ENCODE measurements at regions of chr11 and their contacts with region 1.

Region 1: GRCh38 chr11:10623797-10624761 is 55.6 kb upstream of the LYVE1 start:
- DNase-seq: peak; percentile 33
- ATAC-seq: peak; percentile 75
- H3K4me3 ChIP-seq: no peak overlapping the region
- H3K27ac ChIP-seq: no peak overlapping the region
- H3K4me1 ChIP-seq: no peaks in the 10 kb centered on the region
- H3K27me3 ChIP-seq: peaks cover 9% of the 10 kb centered on the region; the same call in 1 of the 2 replicates
- CTCF ChIP-seq: no peak

Region 2: GRCh38 chr11:9489080-9489765 is 1134.9 kb before region 1 on chr11:
- CTCF ChIA-PET with region 1: no interaction called
- POLR2A ChIA-PET with region 1: interaction called, 13 read pairs
- in situ Hi-C with region 1: no loop called
- intact Hi-C with region 1: no loop called
- DNase-seq: no peak
- ATAC-seq: no peak
- H3K4me3 ChIP-seq: no peak overlapping the region
- H3K27ac ChIP-seq: no peak overlapping the region
- H3K4me1 ChIP-seq: no peaks in the 10 kb centered on the region
- H3K27me3 ChIP-seq: no peaks in the 10 kb centered on the region
- CTCF ChIP-seq: no peak

Measured in Panc1 (cell line).